Heart left ventricle (tissue), 16 donors: ENCODE measurements at regions of chr3 and their contacts with region 1.

Region 1: DNA sequence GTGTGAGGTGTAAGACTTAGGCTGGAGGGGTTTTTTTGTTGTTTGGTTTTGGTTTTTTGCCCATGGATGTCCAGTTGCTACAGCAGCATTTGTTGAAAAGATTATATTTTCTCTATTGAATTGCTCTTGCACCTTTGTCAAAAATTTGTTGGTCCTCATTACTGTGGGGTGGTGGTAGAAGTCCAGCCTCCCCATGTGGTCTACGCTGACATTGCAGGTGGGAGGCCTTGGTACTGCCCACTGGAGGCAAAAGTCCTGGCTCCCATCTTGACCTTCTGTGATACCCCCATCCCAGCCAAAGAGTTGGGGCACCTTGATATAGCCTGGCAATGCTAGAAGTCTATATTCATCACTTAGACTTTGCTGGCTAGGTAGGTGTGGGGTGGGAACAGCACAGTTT is 5.4 kb upstream of the RAB6B start:
- DNase-seq: no peak
- ATAC-seq: peak in 3 of 4 donors; percentile 55 to 71 (median 63)
- H3K4me3 ChIP-seq: no peak overlapping the region
- H3K27ac ChIP-seq: no peak overlapping the region
- H3K4me1 ChIP-seq: peaks cover 0 to 5% (median 2%) of the 10 kb centered on the region in 12 donors
- H3K27me3 ChIP-seq: peaks cover 0 to 8% (median 0%) of the 10 kb centered on the region in 9 donors
- CTCF ChIP-seq: peak; percentile 10 to 55 (median 48)
- POLR2A ChIP-seq: no peak

Region 2: DNA sequence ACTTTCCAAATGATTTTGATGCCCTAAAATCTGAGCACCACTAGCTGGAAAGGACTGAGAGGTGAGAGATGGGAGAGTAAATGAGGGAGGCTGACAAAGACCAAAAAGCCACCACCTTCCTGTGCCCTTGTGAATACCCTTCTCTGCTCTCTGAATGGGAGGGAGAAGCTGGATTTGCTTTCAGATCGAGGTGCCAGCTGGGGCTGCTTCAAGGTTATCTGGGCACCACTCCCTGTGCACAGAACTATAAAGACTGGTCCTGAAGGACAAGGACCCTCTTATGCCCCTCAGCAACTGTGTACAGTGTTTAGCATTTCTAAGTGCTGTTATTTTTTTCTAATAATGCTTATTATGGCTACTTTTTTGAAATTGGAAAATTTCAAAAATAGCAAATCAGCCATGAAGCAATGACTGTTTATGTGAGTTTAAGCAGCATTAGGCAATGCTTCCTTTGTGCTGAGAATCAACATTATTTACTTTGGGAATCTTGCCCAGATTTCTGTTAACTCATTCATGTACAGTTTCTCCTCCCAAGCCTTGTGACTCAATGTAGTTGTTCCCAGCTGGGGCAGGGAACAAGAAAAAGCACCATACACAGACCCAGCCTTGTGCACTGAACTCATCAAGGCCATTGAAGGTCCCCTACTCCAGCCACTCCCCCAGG is 365.0 kb before region 1 on chr3:
- intact Hi-C with region 1: no loop called
- DNase-seq: no peak
- ATAC-seq: peak in 3 of 4 donors; percentile 72 to 83 (median 79)
- H3K4me3 ChIP-seq: no peak overlapping the region
- H3K27ac ChIP-seq: peak overlapping the region in 2 of 12 donors; percentile 20 to 83
- H3K4me1 ChIP-seq: peaks cover 0 to 30% (median 5%) of the 10 kb centered on the region in 12 donors
- H3K27me3 ChIP-seq: no peaks in the 10 kb centered on the region
- CTCF ChIP-seq: no peak
- POLR2A ChIP-seq: no peak

Region 3: DNA sequence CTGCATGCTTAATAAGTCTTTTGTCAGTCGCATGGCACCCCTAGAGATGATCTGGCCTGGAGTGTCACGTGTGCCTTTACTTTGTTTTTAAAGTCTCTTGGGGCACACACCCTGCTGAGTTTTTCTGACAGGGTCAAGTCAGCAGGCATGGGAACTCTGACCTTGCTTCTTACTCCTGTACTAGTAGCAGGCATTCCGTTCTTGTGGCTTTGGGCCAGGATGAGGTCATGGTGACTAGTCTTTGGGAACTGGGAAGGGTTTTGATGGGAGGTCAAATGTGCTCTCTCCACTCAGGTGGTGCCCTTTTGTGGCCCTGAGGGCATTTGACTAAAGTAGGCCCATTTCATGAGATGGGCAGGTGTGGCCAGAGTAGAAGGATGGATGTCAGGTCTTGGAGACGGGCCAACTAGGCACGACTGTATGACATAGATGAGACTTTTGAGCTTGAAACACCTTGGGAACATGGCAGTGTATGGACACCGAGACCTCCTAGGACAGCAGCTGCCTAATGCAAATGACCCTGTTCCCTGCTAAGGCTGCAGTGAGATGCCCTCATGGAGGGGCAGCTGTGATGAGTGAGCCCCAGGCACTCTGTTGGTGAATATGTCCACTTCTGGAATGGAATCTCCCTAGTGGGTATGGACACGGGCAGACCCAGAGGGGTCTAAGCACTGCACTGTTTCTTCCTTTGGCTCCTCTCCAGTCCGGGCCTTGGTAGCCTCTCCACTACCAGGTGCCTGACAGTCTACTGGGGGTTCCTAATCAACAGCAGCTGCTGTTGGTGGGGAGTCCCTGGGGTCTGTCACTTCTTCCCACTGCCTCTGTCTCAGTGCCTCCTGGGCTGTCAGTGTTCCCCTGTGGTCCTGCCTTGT is 79.1 kb before region 1 on chr3:
- intact Hi-C with region 1: loop called in 6 of 10 experiments (anchors 2 to 10 kb)
- DNase-seq: peak in 4 of 5 donors; percentile 71 to 89 (median 78)
- ATAC-seq: peak in 3 of 4 donors; percentile 44 to 80 (median 48)
- H3K4me3 ChIP-seq: no peak overlapping the region
- H3K27ac ChIP-seq: peak overlapping the region in 2 of 12 donors; percentile 2 to 23
- H3K4me1 ChIP-seq: peaks cover 0 to 11% (median 4%) of the 10 kb centered on the region in 12 donors
- H3K27me3 ChIP-seq: no peaks in the 10 kb centered on the region
- CTCF ChIP-seq: peak in 6 of 12 donors; percentile 11 to 61 (median 32)
- POLR2A ChIP-seq: no peak